AG04450 (cell line): ENCODE measurements at regions of chr7 and their contacts with region 1.

Region 1: GRCh38 chr7:129252128-129252527 is 27.3 kb downstream of the AHCYL2 start:
- DNase-seq: no peak
- H3K4me3 ChIP-seq: no peak overlapping the region
- H3K27ac ChIP-seq: no peak overlapping the region
- H3K27me3 ChIP-seq: no peaks in the 10 kb centered on the region
- CTCF ChIP-seq: no peak

Region 2: GRCh38 chr7:129728875-129729467 is 476.8 kb after region 1 on chr7:
- CTCF ChIA-PET with region 1: interaction called, 12 read pairs
- POLR2A ChIA-PET with region 1: no interaction called
- DNase-seq: no peak
- H3K4me3 ChIP-seq: no peak overlapping the region
- H3K27ac ChIP-seq: no peak overlapping the region
- H3K27me3 ChIP-seq: no peaks in the 10 kb centered on the region
- CTCF ChIP-seq: no peak